Naive thymus-derived CD4-positive, alpha-beta T cell (primary cell): ENCODE measurements at regions of chr16 and their contacts with region 1.

Region 1: DNA sequence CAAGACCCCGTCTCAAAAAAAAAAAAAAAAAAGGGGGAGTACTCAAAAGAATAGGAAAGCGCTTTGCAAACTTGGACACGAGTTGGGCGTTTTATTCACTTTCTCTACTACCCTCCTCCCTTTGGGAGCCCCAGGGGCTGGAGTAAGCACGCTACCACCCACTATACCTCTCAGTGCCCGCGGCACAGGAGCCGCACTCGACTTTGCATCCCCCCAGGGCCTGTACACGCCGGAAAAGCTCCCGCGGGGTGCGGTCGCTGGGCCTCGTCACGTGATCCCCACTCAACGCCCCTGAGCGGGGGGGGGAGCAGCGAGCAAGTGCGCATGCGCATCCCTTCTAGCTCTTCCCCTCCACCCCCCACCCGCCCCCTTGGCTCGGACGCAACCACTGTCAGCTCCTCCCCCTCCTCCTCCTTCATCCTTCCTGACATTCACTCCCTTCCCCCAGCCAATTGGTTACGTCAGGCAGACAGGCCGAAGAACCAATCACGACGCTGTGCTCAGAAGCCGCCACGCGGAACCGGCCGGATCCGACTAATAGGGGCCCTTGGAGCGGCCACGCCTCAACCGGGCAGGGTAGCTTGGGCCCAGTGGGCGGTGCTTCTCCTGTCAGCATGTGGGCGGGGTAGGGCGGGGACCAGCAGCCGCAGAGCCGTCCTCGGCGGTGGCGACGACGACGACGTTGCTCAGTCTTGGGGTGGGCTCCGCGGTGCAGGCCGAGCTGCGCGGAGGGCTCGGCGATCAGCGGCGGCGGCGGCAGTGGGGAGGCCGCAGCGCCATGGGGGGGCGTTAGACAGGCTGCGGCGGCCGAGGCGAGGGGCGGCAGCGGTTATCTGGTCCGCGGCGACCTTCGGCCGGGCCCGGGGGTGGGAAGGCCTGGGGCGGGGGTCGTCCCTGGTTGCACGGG is at the start of gene HAPSTR1:
- DNase-seq: peak; percentile 89 to 100 (median 99)
- ATAC-seq: peak; percentile 93
- H3K4me3 ChIP-seq: peak within 1 kb of the TSS; percentile 90
- H3K4me3 Mint-ChIP-seq: peak within 1 kb of the TSS; percentile 90 to 100 (median 98)
- H3K27ac ChIP-seq: peak within 1 kb of the TSS; percentile 98
- H3K27ac Mint-ChIP-seq: peak within 1 kb of the TSS; percentile 92 to 99 (median 97)
- H3K4me1 ChIP-seq: peaks cover 21 to 32% of the 10 kb centered on the region in 2 donors
- H3K4me1 Mint-ChIP-seq: peaks cover 29 to 40% (median 39%) of the 10 kb centered on the region in 7 donors
- H3K27me3 ChIP-seq: no peaks in the 10 kb centered on the region
- H3K27me3 Mint-ChIP-seq: peaks cover 0 to 4% (median 0%) of the 10 kb centered on the region in 5 donors
- total RNA-seq, gene HAPSTR1: 69.6 to 136 (median 87.3) TPM

Region 2: GRCh38 chr16:8567750-8568617 is 523.2 kb before region 1 on chr16:
- CTCF ChIA-PET with region 1: no interaction called
- POLR2A ChIA-PET with region 1: no interaction called
- intact Hi-C with region 1: loop called in 1 of 2 experiments (anchors 1 kb)
- DNase-seq: peak; percentile 53 to 86 (median 79)
- ATAC-seq: peak; percentile 97
- H3K4me3 ChIP-seq: no peak overlapping the region
- H3K4me3 Mint-ChIP-seq: no peak overlapping the region
- H3K27ac ChIP-seq: no peak overlapping the region
- H3K27ac Mint-ChIP-seq: peak overlapping the region in 7 of 9 donors; percentile 10 to 69 (median 60)
- H3K4me1 ChIP-seq: no peaks in the 10 kb centered on the region
- H3K4me1 Mint-ChIP-seq: peaks cover 0 to 8% (median 4%) of the 10 kb centered on the region in 7 donors
- H3K27me3 ChIP-seq: no peaks in the 10 kb centered on the region
- H3K27me3 Mint-ChIP-seq: peaks cover 4 to 19% (median 11%) of the 10 kb centered on the region in 5 donors

Region 3: GRCh38 chr16:8797364-8798173 is 293.6 kb before region 1 on chr16 and contains the starts of genes PMM2 and TMEM186:
- CTCF ChIA-PET with region 1: no interaction called
- POLR2A ChIA-PET with region 1: interaction called, 5 read pairs
- intact Hi-C with region 1: loop called in 1 of 2 experiments (anchors 1 kb)
- DNase-seq: peak; percentile 78 to 96 (median 93)
- ATAC-seq: peak; percentile 99
- H3K4me3 ChIP-seq: peak within 1 kb of the TSS; percentile 90
- H3K4me3 Mint-ChIP-seq: peak within 1 kb of the TSS; percentile 91 to 99 (median 96)
- H3K27ac ChIP-seq: peak within 1 kb of the TSS; percentile 86
- H3K27ac Mint-ChIP-seq: peak within 1 kb of the TSS; percentile 87 to 95 (median 92)
- H3K4me1 ChIP-seq: peaks cover 25 to 32% of the 10 kb centered on the region in 2 donors
- H3K4me1 Mint-ChIP-seq: peaks cover 19 to 71% (median 49%) of the 10 kb centered on the region in 7 donors
- H3K27me3 ChIP-seq: no peaks in the 10 kb centered on the region
- H3K27me3 Mint-ChIP-seq: no peaks in the 10 kb centered on the region
- total RNA-seq, gene PMM2: 32.2 to 52.8 (median 41.7) TPM
- total RNA-seq, gene TMEM186: 3.2 to 16.3 (median 11.3) TPM

Region 4: DNA sequence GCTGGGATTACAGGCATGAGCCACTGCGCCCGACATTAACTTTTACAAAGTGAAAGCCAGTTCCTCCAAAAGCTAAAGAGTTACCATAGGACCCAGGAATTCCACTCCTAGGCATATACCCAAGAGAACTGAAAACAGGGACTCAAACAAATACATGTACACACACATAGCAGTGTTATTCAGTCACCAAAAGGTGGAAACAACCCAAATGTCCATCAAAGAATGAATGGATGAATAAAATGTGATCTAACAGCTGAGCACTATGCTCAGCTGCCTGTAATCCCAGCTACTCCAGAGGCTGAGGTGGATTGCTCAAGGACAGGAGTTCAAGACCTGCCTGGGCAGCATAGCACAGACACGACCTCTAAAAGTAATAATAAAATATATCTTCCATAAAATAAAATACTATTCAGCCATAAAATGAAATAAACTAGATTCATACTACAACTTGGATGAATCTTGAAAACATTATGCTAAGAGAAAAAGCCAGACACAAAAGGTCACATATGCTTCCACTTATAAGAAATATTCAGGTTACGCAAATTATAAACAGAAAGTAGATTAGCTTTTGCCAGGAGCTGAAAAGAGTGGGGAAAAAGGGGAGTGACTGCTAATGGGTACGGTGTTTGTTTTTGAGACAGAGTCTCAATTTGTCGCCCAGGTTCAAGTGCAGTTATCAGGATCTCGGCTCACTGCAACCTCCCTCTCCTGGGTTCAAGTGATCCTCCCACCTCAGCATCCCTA is 118.2 kb before region 1 on chr16:
- CTCF ChIA-PET with region 1: no interaction called
- POLR2A ChIA-PET with region 1: no interaction called
- intact Hi-C with region 1: no loop called
- DNase-seq: no peak
- ATAC-seq: no peak
- H3K4me3 ChIP-seq: no peak overlapping the region
- H3K4me3 Mint-ChIP-seq: no peak overlapping the region
- H3K27ac ChIP-seq: no peak overlapping the region
- H3K27ac Mint-ChIP-seq: no peak overlapping the region
- H3K4me1 ChIP-seq: no peaks in the 10 kb centered on the region
- H3K4me1 Mint-ChIP-seq: no peaks in the 10 kb centered on the region
- H3K27me3 ChIP-seq: no peaks in the 10 kb centered on the region
- H3K27me3 Mint-ChIP-seq: peaks cover 0 to 38% (median 0%) of the 10 kb centered on the region in 5 donors

Region 5: DNA sequence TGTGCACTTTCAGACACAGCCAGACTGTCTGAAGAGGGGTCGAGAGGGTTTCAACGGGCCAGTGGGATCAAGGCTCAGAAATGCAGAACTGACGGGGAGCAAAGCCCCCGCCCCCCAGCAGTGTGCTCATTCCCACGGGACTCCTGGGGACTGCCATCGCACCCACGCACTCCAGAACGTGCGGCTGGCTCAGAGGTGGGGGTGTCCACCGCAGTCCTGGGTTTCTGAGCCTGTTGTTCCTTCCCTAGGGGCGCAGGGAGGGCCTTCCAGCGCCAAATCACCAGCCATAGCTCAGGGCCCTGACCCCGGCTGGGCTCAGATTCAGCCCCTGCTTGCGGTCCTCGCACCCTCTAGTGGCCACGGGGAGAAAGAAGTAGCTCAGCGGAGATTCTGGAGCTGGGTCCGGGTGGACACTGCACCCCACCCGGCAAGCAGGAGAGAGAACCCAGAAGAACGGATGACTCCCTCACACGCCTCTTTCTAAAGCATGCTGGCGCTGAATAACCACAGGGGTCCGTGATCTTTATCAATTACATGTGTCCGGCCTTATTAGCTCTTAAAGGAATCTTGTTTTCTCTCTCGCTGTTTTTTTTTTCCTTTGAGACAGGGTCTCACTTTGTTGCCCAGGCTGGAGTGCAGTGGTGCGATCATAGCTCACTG is 82.5 kb before region 1 on chr16:
- CTCF ChIA-PET with region 1: interaction called, 5 read pairs
- POLR2A ChIA-PET with region 1: no interaction called
- intact Hi-C with region 1: loop called in 1 of 2 experiments (anchors 2 kb)
- DNase-seq: peak; percentile 30 to 66 (median 57)
- ATAC-seq: peak; percentile 93
- H3K4me3 ChIP-seq: no peak overlapping the region
- H3K4me3 Mint-ChIP-seq: peak overlapping the region in 4 of 10 donors; percentile 49 to 67 (median 58)
- H3K27ac ChIP-seq: no peak overlapping the region
- H3K27ac Mint-ChIP-seq: no peak overlapping the region
- H3K4me1 ChIP-seq: peaks cover 0 to 6% of the 10 kb centered on the region in 2 donors
- H3K4me1 Mint-ChIP-seq: peaks cover 0 to 4% (median 3%) of the 10 kb centered on the region in 7 donors
- H3K27me3 ChIP-seq: no peaks in the 10 kb centered on the region
- H3K27me3 Mint-ChIP-seq: peaks cover 4 to 19% (median 8%) of the 10 kb centered on the region in 5 donors

Region 6: DNA sequence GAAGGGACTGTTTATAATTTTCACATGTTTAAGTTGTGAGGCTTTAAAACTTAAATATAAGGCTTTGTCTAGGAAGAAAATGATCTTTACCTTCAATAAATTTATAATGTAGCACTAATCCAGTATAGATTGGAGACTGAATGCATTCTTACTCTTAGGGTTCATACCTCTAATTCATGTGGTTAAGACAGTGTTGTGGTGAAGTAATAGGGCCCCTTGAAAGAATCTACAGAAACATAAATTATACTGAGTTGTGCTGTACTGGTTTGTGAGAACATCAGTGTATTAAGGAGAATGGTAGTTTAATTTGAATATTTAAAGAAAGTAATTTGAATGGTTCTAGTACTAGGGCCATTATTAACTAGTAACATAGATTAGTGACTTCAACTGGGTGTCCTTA is 14.0 kb after region 1 on chr16:
- CTCF ChIA-PET with region 1: interaction called, 5 read pairs
- POLR2A ChIA-PET with region 1: interaction called, 37 read pairs
- intact Hi-C with region 1: loop called in 1 of 2 experiments (anchors 1 kb)
- DNase-seq: no peak
- ATAC-seq: peak; percentile 38
- H3K4me3 ChIP-seq: no peak overlapping the region
- H3K4me3 Mint-ChIP-seq: peak overlapping the region in 9 of 10 donors; percentile 9 to 77 (median 66)
- H3K27ac ChIP-seq: no peak overlapping the region
- H3K27ac Mint-ChIP-seq: peak overlapping the region in 7 of 9 donors; percentile 17 to 75 (median 48)
- H3K4me1 ChIP-seq: peaks cover 75 to 98% of the 10 kb centered on the region in 2 donors
- H3K4me1 Mint-ChIP-seq: peaks cover 75 to 100% (median 95%) of the 10 kb centered on the region in 7 donors
- H3K27me3 ChIP-seq: no peaks in the 10 kb centered on the region
- H3K27me3 Mint-ChIP-seq: no peaks in the 10 kb centered on the region

Region 7: DNA sequence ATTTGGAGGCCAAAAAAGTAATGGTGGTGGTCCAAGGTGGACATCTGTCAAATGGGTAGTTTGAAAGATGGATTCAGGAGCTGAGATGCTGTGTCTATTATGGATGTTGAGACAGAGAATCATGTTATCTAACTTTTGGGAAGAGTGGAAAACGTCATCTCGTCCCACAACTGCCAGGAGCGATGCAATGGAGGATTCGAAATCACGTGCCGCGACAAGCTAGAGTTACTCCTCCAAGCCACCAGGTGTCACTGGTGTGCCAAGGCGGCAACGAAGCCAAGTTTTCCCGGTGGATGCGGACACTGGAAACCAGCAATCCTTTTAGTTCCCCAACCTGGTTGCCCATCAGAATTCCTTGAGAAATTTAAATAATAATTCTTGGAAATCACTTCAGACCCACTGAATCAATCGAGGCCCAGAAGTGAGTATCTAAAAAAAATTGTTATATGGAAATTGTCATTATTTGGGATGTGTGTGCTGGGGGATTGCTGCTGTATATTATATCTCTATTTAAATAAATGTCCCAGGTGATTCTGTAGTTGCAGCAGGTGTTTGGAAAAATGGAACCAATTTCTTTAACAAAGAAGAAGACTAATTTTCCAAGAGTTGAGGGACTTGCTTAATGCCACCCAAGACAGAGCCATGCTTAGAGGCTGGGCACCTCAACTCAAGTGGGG is 206.4 kb after region 1 on chr16:
- CTCF ChIA-PET with region 1: no interaction called
- POLR2A ChIA-PET with region 1: no interaction called
- intact Hi-C with region 1: no loop called
- DNase-seq: no peak
- ATAC-seq: no peak
- H3K4me3 ChIP-seq: no peak overlapping the region
- H3K4me3 Mint-ChIP-seq: no peak overlapping the region
- H3K27ac ChIP-seq: no peak overlapping the region
- H3K27ac Mint-ChIP-seq: no peak overlapping the region
- H3K4me1 ChIP-seq: no peaks in the 10 kb centered on the region
- H3K4me1 Mint-ChIP-seq: peaks cover 0 to 3% (median 0%) of the 10 kb centered on the region in 7 donors
- H3K27me3 ChIP-seq: no peaks in the 10 kb centered on the region
- H3K27me3 Mint-ChIP-seq: peaks cover 0 to 22% (median 13%) of the 10 kb centered on the region in 5 donors

Region 8: DNA sequence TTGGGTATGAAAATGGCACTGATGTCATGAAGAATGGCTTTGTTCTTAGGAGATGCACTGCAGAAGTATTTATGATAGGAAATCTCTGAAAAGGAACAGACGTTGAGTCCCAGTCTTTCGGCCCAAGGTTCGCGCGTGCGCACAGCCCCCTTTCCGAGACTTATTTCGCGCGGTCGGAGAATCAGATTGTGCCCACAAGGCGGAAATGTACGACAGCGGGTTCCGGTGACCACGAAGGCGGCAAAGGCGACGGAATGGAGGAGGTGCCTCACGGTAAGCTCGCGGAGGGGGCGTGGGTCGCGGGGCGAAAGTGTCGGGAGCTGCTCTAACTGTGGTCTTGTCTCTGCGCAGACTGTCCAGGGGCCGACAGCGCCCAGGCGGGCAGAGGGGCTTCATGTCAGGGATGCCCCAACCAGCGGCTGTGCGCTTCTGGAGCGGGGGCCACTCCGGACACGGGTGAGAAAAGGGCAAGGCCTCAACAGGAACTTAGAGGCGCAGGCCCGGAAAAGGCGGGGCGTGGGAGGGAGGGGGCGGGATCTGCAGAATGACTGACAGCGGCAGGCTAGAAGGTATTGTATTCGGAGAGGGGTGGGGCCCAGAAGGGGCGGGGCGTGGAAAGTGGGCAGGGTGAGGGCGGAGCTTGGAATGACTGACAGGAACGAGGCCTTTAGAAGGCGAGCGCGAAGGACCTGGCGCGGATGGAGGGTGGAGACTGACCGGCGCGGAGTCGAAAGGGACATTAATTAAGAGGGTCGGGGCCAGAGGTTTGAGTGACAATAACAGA is 1652.6 kb after region 1 on chr16 and contains the start of gene NUBP1:
- CTCF ChIA-PET with region 1: no interaction called
- POLR2A ChIA-PET with region 1: interaction called, 10 read pairs
- intact Hi-C with region 1: loop called in 1 of 2 experiments (anchors 1 kb)
- DNase-seq: peak; percentile 97 to 99 (median 99)
- ATAC-seq: peak; percentile 98
- H3K4me3 ChIP-seq: peak within 1 kb of the TSS; percentile 74
- H3K4me3 Mint-ChIP-seq: peak within 1 kb of the TSS; percentile 84 to 99 (median 95)
- H3K27ac ChIP-seq: peak within 1 kb of the TSS; percentile 92
- H3K27ac Mint-ChIP-seq: peak within 1 kb of the TSS; percentile 98 to 100 (median 99)
- H3K4me1 ChIP-seq: peaks cover 7 to 10% of the 10 kb centered on the region in 2 donors
- H3K4me1 Mint-ChIP-seq: peaks cover 15 to 48% (median 27%) of the 10 kb centered on the region in 7 donors
- H3K27me3 ChIP-seq: no peaks in the 10 kb centered on the region
- H3K27me3 Mint-ChIP-seq: peaks cover 0 to 2% (median 0%) of the 10 kb centered on the region in 5 donors
- total RNA-seq, gene NUBP1: 24.0 to 30.0 (median 25.5) TPM